ENCODE measurements at regions of chr11 and their contacts with region 1.

Region 1: DNA sequence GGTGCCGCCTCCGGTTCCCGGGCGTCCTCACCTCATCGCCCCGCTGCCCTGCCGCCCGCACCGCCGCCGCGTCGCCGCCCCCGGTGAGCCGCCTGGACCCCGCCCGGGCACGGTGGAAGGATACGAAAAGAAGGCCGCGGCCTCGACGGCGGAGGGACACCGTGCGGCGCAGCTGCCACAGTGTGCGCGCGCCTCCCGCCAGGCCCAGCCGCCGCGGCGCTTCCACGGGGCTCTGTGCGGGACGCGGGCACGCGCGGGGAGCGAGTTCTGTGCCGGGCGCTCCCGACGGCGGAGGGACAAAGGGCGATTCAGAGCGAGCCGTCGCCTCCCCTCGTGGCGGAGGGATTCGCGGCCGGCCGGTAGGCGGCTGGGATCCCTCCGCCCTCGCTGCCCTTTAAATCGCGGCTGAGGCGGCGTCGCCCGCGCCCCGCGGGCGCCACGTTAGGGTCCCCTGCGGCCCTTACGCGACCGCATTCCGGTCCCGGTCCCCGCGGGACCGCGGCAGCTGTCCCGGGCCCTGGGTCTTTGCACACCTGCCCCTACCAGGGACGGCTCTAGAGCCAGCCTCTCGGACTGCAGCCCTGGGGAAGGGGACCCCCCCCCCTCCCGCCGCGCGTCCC is 569 bp upstream of the KMT5B start:
- DNase-seq: peak; percentile 85
- ATAC-seq: peak; percentile 46
- H3K4me3 Mint-ChIP-seq: peak overlapping the region; percentile 83
- H3K27ac Mint-ChIP-seq: peak overlapping the region; percentile 79
- H3K4me1 Mint-ChIP-seq: peaks cover 51% of the 10 kb centered on the region
- H3K27me3 Mint-ChIP-seq: no peaks in the 10 kb centered on the region
- CTCF ChIP-seq: no peak

Region 2: GRCh38 chr11:68010090-68011041 is 203.3 kb before region 1 on chr11 and contains the start of gene ALDH3B1:
- CTCF ChIA-PET with region 1: interaction called, 23 read pairs
- POLR2A ChIA-PET with region 1: interaction called, 4 read pairs
- intact Hi-C with region 1: no loop called
- DNase-seq: peak; percentile 54
- ATAC-seq: peak; percentile 83
- H3K4me3 Mint-ChIP-seq: peak within 1 kb of the TSS; percentile 78
- H3K27ac Mint-ChIP-seq: peak within 1 kb of the TSS; percentile 79
- H3K4me1 Mint-ChIP-seq: peaks cover 51% of the 10 kb centered on the region
- H3K27me3 Mint-ChIP-seq: no peaks in the 10 kb centered on the region
- CTCF ChIP-seq: no peak
- total RNA-seq, gene ALDH3B1: 0.53 and 0.98 TPM in 2 replicates

Region 3: GRCh38 chr11:68090706-68091105 is 123.0 kb before region 1 on chr11:
- CTCF ChIA-PET with region 1: no interaction called
- POLR2A ChIA-PET with region 1: no interaction called
- intact Hi-C with region 1: no loop called
- DNase-seq: no peak
- ATAC-seq: peak; percentile 81
- H3K4me3 Mint-ChIP-seq: peak overlapping the region; percentile 58
- H3K27ac Mint-ChIP-seq: peak overlapping the region; percentile 64
- H3K4me1 Mint-ChIP-seq: peaks cover 12% of the 10 kb centered on the region
- H3K27me3 Mint-ChIP-seq: no peaks in the 10 kb centered on the region
- CTCF ChIP-seq: no peak

Region 4: GRCh38 chr11:68193018-68193417 is 20.6 kb before region 1 on chr11:
- CTCF ChIA-PET with region 1: interaction called, 10 read pairs
- POLR2A ChIA-PET with region 1: interaction called, 3 read pairs
- intact Hi-C with region 1: no loop called
- DNase-seq: no peak
- ATAC-seq: no peak
- H3K4me3 Mint-ChIP-seq: peak overlapping the region; percentile 19
- H3K27ac Mint-ChIP-seq: no peak overlapping the region
- H3K4me1 Mint-ChIP-seq: peaks cover 67% of the 10 kb centered on the region
- H3K27me3 Mint-ChIP-seq: no peaks in the 10 kb centered on the region
- CTCF ChIP-seq: no peak

Region 5: DNA sequence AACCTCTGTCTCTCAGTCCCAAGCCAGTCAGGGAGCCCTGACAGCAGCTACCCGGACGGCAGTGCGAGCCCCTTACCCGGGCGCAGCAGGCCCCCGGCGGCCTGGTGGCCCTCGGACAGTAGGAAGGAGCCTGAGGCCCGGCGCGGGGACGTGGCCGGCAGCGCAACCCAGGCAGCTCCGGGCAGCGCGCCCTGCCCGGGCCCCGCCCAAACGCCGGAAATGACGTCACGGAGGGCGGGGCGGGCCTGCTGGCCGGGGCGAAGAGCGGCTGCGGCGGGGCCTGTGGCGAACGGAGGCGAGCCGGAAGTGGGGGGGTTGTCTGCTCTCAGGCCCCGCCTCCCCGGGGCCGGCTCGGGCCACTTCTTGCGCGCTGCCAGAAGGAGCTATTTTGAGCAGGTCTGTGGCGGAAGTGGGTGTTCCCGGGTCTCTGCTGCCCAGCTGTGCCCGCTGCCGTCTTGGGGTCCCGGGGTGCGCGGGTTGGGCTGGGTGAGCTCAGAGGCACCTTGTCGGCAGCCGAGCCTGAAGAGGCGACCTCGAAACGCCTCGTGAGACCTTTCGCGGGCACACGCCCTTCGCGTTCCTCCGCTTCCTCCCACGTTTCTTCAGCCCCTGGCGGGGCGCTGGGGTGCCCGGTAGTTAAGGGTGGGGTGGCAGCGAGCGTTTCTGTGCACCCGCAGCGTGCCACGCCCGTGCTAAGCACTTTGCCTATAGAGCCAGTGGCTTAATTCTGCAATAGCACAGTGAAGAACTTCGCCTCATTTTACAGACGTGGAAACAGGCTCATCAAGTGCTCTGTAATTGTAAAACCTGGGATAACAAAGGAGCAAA is 58.3 kb after region 1 on chr11 and contains the start of gene C11orf24:
- CTCF ChIA-PET with region 1: interaction called, 4 read pairs
- POLR2A ChIA-PET with region 1: interaction called, 11 read pairs
- intact Hi-C with region 1: loop called (anchors 1 kb)
- DNase-seq: peak; percentile 95
- ATAC-seq: peak; percentile 78
- H3K4me3 Mint-ChIP-seq: peak within 1 kb of the TSS; percentile 95
- H3K27ac Mint-ChIP-seq: peak within 1 kb of the TSS; percentile 98
- H3K4me1 Mint-ChIP-seq: peaks cover 79% of the 10 kb centered on the region
- H3K27me3 Mint-ChIP-seq: no peaks in the 10 kb centered on the region
- CTCF ChIP-seq: no peak
- total RNA-seq, gene C11orf24: 75.5 and 78.0 TPM in 2 replicates

Region 6: DNA sequence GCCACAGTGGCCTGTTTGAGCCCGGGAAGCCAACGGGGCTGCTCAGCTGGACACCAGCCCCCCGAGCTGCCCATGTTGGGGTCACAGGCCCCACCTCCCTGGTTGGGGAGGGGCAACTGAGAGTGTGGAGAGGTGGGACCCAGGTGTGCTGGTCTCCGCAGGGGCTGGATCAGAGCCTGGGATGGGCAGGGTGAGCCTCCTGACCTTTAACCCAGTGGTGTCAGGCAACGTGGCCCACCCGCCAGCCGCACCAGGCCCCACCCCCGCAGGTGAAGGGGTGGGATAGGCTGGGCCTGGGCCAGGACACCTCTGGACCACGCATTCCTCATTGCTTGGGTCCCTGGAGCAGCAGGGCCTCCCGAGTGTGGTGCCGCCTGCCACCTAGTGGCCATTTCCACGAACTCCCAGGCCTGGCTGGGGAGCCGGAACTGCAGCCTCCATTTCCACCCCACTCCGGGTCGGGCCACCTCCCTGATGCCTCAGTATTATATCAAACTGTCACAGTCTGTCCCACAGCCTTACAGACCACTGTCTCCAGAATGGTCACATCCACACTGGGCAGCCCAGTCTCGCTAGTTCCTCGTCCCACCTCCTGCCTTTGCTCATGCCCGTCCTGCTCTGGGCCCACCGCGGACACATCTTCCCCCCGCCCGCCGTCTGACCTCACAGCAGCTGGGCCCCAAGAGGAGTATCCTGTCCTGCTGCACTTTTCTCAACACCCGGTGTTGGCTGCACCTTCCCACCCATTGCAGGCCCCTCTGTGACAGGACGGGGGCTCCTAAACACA is 233.5 kb after region 1 on chr11:
- CTCF ChIA-PET with region 1: no interaction called
- POLR2A ChIA-PET with region 1: no interaction called
- intact Hi-C with region 1: loop called (anchors 1 kb)
- DNase-seq: peak; percentile 74
- ATAC-seq: peak; percentile 99
- H3K4me3 Mint-ChIP-seq: no peak overlapping the region
- H3K27ac Mint-ChIP-seq: no peak overlapping the region
- H3K4me1 Mint-ChIP-seq: peaks cover 13% of the 10 kb centered on the region
- H3K27me3 Mint-ChIP-seq: no peaks in the 10 kb centered on the region
- CTCF ChIP-seq: peak; percentile 97

Measured in activated B cell treated with CpG ODN at 0.5 μM for 24 hours (primary cell).